ENCODE measurements at regions of chr14 and their contacts with region 1.

Region 1: DNA sequence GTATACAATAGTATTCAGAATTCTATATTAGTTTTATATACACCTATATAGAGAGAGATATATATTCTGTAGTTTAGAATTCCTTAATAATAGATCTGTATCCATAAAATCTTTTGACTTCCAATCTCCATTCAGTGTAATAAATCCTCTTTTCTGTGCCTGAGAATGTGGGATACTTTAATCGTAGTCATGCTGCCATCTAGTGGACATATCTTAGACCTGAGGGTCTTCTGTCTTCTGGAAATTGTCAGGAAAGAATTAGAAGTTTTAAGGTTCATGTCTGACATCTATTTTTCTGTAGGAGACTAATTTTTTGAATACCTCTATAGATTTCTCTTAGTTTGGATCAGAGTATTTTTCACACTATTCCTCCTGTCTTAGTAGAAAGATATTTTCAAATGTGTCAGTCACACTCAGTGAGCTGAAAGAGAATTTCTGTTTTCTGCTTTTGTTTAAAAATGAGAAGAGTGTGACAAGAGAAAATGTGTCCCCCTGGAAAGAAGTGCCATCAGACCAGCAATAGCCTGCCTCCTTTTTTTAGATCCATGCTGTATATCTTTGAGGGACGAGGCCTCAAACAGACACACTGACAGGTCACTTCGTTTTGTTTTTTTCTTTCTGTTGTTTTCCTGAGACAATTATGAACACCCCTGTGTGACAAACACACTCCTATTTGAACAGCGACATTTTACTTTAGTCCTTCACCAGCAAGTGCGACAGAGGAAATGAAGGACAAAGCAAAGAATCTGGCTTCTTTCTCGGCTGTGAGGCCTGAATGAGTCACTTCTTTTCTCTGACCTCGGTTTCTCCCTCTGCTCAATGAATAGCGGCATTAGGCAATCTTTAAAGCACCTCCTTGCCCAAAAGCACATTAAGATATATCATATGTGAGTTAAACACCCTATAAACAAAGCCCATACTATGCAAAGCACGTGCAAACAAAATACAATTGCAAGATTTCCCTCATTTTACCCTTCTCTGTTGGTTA is 96.3 kb downstream of the GALC start:
- DNase-seq: no peak
- H3K4me3 Mint-ChIP-seq: no peak overlapping the region
- H3K27ac Mint-ChIP-seq: no peak overlapping the region
- H3K4me1 Mint-ChIP-seq: no peaks in the 10 kb centered on the region
- H3K27me3 Mint-ChIP-seq: peaks cover 2% of the 10 kb centered on the region

Region 2: GRCh38 chr14:87745507-87746118 is 151.1 kb before region 1 on chr14:
- CTCF ChIA-PET with region 1: interaction called, 20 read pairs
- POLR2A ChIA-PET with region 1: no interaction called
- intact Hi-C with region 1: loop called (anchors 1 kb)
- DNase-seq: peak; percentile 25
- H3K4me3 Mint-ChIP-seq: no peak overlapping the region
- H3K27ac Mint-ChIP-seq: no peak overlapping the region
- H3K4me1 Mint-ChIP-seq: no peaks in the 10 kb centered on the region
- H3K27me3 Mint-ChIP-seq: peaks cover 1% of the 10 kb centered on the region